Stomach (tissue), 19 donors: ENCODE measurements at regions of chr9 and their contacts with region 1.

Region 1: GRCh38 chr9:31471010-31471409 is 913.4 kb upstream of the ACO1 start:
- DNase-seq: no peak
- H3K4me3 ChIP-seq: no peak overlapping the region
- H3K27ac ChIP-seq: no peak overlapping the region
- H3K4me1 ChIP-seq: no peaks in the 10 kb centered on the region
- H3K27me3 ChIP-seq: no peaks in the 10 kb centered on the region
- CTCF ChIP-seq: no peak
- EP300 ChIP-seq: no peak
- POLR2A ChIP-seq: no peak

Region 2: GRCh38 chr9:31535651-31536050 is 64.6 kb after region 1 on chr9:
- intact Hi-C with region 1: loop called (anchors 10 kb)
- DNase-seq: no peak
- H3K4me3 ChIP-seq: no peak overlapping the region
- H3K27ac ChIP-seq: no peak overlapping the region
- H3K4me1 ChIP-seq: no peaks in the 10 kb centered on the region
- H3K27me3 ChIP-seq: no peaks in the 10 kb centered on the region
- CTCF ChIP-seq: no peak
- EP300 ChIP-seq: no peak
- POLR2A ChIP-seq: no peak

Region 3: GRCh38 chr9:31556667-31557463 is 85.9 kb after region 1 on chr9:
- intact Hi-C with region 1: no loop called
- DNase-seq: no peak
- H3K4me3 ChIP-seq: no peak overlapping the region
- H3K27ac ChIP-seq: no peak overlapping the region
- H3K4me1 ChIP-seq: no peaks in the 10 kb centered on the region
- H3K27me3 ChIP-seq: no peaks in the 10 kb centered on the region
- CTCF ChIP-seq: no peak
- EP300 ChIP-seq: no peak
- POLR2A ChIP-seq: no peak

Region 4: DNA sequence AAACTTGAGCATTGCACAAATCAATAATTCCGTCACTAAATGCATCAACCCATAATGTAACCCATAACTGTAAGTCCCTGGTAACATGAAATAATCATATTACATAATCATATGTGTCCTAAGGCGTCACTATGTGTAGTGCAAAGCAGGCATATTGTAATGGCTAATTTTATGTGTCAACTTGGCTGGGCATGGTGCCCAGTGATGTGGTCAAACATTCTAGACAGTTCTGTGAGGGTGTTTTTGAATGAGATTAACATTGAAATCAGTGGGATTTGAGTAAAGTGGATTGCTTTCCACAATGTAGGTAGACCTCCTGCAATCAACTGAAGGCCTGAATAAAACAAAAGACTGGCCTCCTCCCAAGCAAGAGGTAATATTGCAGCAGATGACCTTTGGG is 119.1 kb after region 1 on chr9:
- intact Hi-C with region 1: no loop called
- DNase-seq: no peak
- H3K4me3 ChIP-seq: no peak overlapping the region
- H3K27ac ChIP-seq: no peak overlapping the region
- H3K4me1 ChIP-seq: no peaks in the 10 kb centered on the region
- H3K27me3 ChIP-seq: no peaks in the 10 kb centered on the region
- CTCF ChIP-seq: no peak
- EP300 ChIP-seq: no peak
- POLR2A ChIP-seq: no peak